ENCODE measurements at regions of chr3 and their contacts with region 1.

Region 1: DNA sequence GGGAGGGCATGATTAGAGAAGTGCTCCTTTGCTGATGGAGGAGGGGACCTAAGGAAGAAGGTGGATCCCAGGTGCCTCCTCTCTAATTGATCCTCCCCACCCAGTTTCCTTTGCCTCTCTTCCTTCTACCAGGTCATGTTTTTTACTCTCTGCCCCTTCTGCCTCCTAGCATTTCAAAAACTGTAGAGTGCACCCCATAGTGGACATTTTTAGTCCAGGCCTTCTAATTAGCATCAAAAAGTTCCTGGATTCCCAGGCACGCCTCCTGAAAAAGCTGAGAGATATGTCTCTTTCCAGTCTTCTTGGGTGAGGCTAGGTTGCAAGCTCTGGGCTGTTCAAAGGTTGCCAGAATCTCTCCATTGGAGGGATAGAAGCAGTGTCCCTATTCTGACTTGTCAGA is 18.7 kb upstream of the ITGB5 start:
- DNase-seq: no peak
- ATAC-seq: no peak
- H3K4me3 Mint-ChIP-seq: no peak overlapping the region
- H3K27ac Mint-ChIP-seq: no peak overlapping the region
- H3K4me1 Mint-ChIP-seq: peaks cover 1% of the 10 kb centered on the region
- H3K27me3 Mint-ChIP-seq: peaks cover 37% of the 10 kb centered on the region

Region 2: GRCh38 chr3:124741027-124741426 is 164.8 kb before region 1 on chr3:
- CTCF ChIA-PET with region 1: no interaction called
- DNase-seq: no peak
- ATAC-seq: no peak
- H3K4me3 Mint-ChIP-seq: no peak overlapping the region
- H3K27ac Mint-ChIP-seq: no peak overlapping the region
- H3K4me1 Mint-ChIP-seq: peaks cover 6% of the 10 kb centered on the region
- H3K27me3 Mint-ChIP-seq: no peaks in the 10 kb centered on the region

Region 3: GRCh38 chr3:124761250-124761796 is 144.5 kb before region 1 on chr3:
- CTCF ChIA-PET with region 1: interaction called, 166 read pairs
- DNase-seq: peak; percentile 82
- ATAC-seq: peak; percentile 90
- H3K4me3 Mint-ChIP-seq: peak overlapping the region; percentile 42
- H3K27ac Mint-ChIP-seq: no peak overlapping the region
- H3K4me1 Mint-ChIP-seq: peaks cover 4% of the 10 kb centered on the region
- H3K27me3 Mint-ChIP-seq: peaks cover 3% of the 10 kb centered on the region

Region 4: GRCh38 chr3:124768812-124769211 is 137.0 kb before region 1 on chr3:
- CTCF ChIA-PET with region 1: interaction called, 166 read pairs
- DNase-seq: no peak
- ATAC-seq: no peak
- H3K4me3 Mint-ChIP-seq: no peak overlapping the region
- H3K27ac Mint-ChIP-seq: no peak overlapping the region
- H3K4me1 Mint-ChIP-seq: no peaks in the 10 kb centered on the region
- H3K27me3 Mint-ChIP-seq: peaks cover 31% of the 10 kb centered on the region

Region 5: DNA sequence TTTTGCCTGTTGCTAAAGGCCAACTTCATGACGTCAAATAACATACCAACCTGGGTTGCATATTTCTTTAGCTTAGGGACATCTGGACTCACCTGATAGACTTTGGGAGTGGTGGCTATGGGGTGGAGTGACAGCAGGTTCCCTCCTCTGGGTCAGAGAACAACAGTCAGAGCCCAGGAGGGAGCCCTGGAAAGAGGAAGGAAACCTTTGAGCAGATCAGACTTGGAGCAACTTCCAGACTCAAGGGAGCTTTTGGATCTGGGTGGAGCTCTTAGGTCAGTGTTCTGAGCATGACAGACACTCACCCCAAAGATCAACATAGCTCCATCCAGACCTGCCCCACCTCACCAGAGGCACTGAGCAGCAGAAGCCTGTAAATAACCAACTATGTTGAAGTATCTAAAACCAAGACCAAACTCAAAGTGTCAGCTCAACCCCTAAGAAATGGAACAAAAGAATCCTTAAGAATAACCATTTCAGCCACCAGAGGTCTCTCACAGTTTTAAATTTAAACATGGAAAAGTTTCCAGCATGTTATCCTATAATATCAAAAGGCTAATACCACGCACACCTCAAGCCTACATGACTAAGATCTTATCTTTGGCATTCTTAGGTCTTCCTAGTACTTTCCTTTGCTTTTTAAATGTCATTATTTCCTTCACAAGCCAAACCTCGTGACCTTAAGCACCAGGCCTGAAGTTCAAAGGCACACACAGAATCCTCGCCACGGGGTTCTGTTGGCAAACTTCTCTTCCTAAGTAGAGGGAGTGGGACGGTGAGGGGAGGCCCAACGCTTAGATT is 119.2 kb before region 1 on chr3:
- CTCF ChIA-PET with region 1: interaction called, 17 read pairs
- DNase-seq: no peak
- ATAC-seq: no peak
- H3K4me3 Mint-ChIP-seq: no peak overlapping the region
- H3K27ac Mint-ChIP-seq: no peak overlapping the region
- H3K4me1 Mint-ChIP-seq: peaks cover 10% of the 10 kb centered on the region
- H3K27me3 Mint-ChIP-seq: peaks cover 6% of the 10 kb centered on the region

Region 6: GRCh38 chr3:124878561-124879336 is 27.1 kb before region 1 on chr3:
- CTCF ChIA-PET with region 1: interaction called, 11 read pairs
- DNase-seq: peak; percentile 61
- ATAC-seq: peak; percentile 61
- H3K4me3 Mint-ChIP-seq: no peak overlapping the region
- H3K27ac Mint-ChIP-seq: no peak overlapping the region
- H3K4me1 Mint-ChIP-seq: peaks cover 12% of the 10 kb centered on the region
- H3K27me3 Mint-ChIP-seq: peaks cover 45% of the 10 kb centered on the region

Region 7: GRCh38 chr3:124890282-124891190 is 15.3 kb before region 1 on chr3:
- CTCF ChIA-PET with region 1: interaction called, 26 read pairs
- DNase-seq: no peak
- ATAC-seq: no peak
- H3K4me3 Mint-ChIP-seq: no peak overlapping the region
- H3K27ac Mint-ChIP-seq: no peak overlapping the region
- H3K4me1 Mint-ChIP-seq: peaks cover 3% of the 10 kb centered on the region
- H3K27me3 Mint-ChIP-seq: peaks cover 49% of the 10 kb centered on the region

Measured in activated CD8-positive, alpha-beta memory T cell treated with anti-CD3 and anti-CD28 coated beads, Interleukin-2, amount 10 ng/mL, durations not matched to agents 7 days and 5 days (primary cell).